ENCODE measurements at regions of chr13 and their contacts with region 1.

Region 1: DNA sequence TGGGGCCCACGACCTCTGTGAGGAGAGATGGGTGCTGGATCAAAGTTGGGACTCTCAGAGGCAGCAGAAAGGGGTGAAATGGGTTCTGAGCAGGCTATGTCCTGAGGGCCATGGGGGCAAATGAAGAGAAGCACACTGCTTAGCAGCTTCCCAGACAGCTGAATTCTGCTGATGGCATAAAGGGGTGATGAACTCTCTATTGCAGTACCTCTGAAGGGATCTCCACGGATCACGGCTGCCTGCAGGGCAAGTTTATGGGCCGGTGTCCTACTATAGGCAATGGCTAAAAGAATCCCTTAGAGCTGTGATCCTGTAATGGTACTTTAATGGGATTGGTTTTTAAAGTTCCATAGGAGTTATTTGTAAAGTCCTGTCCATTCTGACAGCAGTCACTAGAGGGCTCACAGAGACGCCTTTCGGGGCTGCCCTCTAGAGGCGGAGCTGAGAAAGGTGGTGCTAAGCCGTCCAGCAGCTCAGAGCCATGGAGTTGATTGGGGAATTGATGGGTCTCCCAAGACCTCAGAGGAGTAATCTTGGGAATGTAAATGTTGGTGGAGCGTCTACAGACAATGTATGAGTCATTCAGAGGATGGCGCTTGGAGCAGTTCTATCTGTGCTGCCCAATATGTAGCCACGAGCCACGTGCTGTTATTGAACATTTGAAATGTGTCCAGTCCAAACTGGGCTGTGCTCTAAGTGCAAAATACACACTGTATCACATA is 287.3 kb downstream of the COG6 start:
- DNase-seq: peak; percentile 40 to 81 (median 72)
- ATAC-seq: peak; percentile 99
- H3K4me3 ChIP-seq: no peak overlapping the region
- H3K4me3 Mint-ChIP-seq: no peak overlapping the region
- H3K27ac ChIP-seq: no peak overlapping the region
- H3K27ac Mint-ChIP-seq: no peak overlapping the region
- H3K4me1 ChIP-seq: no peaks in the 10 kb centered on the region
- H3K4me1 Mint-ChIP-seq: peaks cover 4% of the 10 kb centered on the region
- H3K27me3 ChIP-seq: peaks cover 0 to 2% of the 10 kb centered on the region in 2 experiments
- H3K27me3 Mint-ChIP-seq: peaks cover 2% of the 10 kb centered on the region
- CTCF ChIP-seq: peak; percentile 96

Region 2: DNA sequence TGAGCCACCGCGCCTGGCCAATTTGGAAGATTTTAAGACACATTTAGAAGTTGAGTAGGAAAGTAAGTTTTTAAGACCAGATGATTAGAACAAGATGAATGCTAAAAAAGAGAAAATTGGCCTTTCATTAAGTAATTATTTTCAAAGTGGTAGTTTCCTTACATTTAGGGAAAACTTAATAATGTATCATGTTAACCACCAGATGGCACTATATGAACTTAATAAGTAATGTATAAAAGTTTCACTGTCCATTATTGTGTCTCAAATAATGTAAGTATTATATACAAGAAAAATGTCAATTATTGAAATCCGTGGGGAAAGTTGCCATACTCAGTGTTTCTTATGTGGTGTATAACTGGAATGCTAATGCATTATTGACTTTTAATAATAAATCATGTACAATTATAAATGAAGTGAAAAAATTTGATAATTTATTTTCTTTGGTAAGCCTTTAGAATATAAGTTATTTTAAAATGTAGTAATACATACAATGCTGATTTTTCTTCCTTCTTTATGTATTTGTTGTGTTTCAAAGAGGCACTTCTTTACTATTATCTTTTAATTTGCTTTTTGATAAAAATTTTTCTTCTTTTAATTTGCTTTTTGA is 258.1 kb before region 1 on chr13:
- CTCF ChIA-PET with region 1: interaction called, 3 read pairs
- POLR2A ChIA-PET with region 1: no interaction called
- intact Hi-C with region 1: loop called (anchors 2 to 5 kb)
- DNase-seq: peak in 2 of 9 experiments; percentile 29 to 51
- ATAC-seq: peak; percentile 46
- H3K4me3 ChIP-seq: no peak overlapping the region
- H3K4me3 Mint-ChIP-seq: no peak overlapping the region
- H3K27ac ChIP-seq: no peak overlapping the region
- H3K27ac Mint-ChIP-seq: no peak overlapping the region
- H3K4me1 ChIP-seq: no peaks in the 10 kb centered on the region
- H3K4me1 Mint-ChIP-seq: no peaks in the 10 kb centered on the region
- H3K27me3 ChIP-seq: no peaks in the 10 kb centered on the region
- H3K27me3 Mint-ChIP-seq: no peaks in the 10 kb centered on the region
- CTCF ChIP-seq: peak; percentile 59

Region 3: DNA sequence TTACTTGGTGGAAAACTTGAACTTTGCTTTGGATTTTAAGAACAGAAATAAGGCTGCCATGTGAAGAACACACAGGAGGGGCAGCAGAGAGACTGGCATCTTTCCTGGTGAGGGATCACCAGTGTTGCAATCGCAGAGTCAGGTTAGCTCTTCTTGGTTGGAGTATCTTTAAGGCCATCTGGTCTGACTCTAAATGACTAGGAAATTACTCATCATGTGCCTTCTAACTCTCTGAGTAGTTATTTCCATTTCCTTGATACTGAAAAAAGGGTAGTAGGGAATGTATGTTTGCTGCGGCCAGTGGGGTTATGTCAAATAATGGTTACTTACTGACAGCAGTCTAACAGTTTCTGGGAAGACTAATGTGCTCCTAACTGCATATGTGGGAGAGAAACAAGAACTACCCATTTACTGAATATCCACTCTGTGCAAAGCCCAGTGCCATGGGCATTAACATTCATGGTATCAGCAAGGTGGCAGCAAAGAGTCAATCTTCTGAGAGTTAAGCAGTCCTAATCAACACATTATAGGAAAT is 165.1 kb before region 1 on chr13:
- CTCF ChIA-PET with region 1: interaction called, 11 read pairs
- POLR2A ChIA-PET with region 1: no interaction called
- intact Hi-C with region 1: loop called (anchors 5 kb)
- DNase-seq: peak in 2 of 9 experiments; percentile 37 to 48
- ATAC-seq: peak; percentile 52
- H3K4me3 ChIP-seq: no peak overlapping the region
- H3K4me3 Mint-ChIP-seq: no peak overlapping the region
- H3K27ac ChIP-seq: no peak overlapping the region
- H3K27ac Mint-ChIP-seq: no peak overlapping the region
- H3K4me1 ChIP-seq: peaks cover 25% of the 10 kb centered on the region
- H3K4me1 Mint-ChIP-seq: peaks cover 31% of the 10 kb centered on the region
- H3K27me3 ChIP-seq: no peaks in the 10 kb centered on the region
- H3K27me3 Mint-ChIP-seq: no peaks in the 10 kb centered on the region
- CTCF ChIP-seq: no peak

Region 4: GRCh38 chr13:39892721-39893685 is 49.7 kb before region 1 on chr13:
- CTCF ChIA-PET with region 1: interaction called, 14 read pairs
- POLR2A ChIA-PET with region 1: no interaction called
- intact Hi-C with region 1: no loop called
- DNase-seq: peak in 5 of 9 experiments; percentile 6 to 63 (median 30)
- ATAC-seq: peak; percentile 57
- H3K4me3 ChIP-seq: no peak overlapping the region
- H3K4me3 Mint-ChIP-seq: peak overlapping the region; percentile 24
- H3K27ac ChIP-seq: no peak overlapping the region
- H3K27ac Mint-ChIP-seq: peak overlapping the region; percentile 7
- H3K4me1 ChIP-seq: peaks cover 26% of the 10 kb centered on the region
- H3K4me1 Mint-ChIP-seq: peaks cover 35% of the 10 kb centered on the region
- H3K27me3 ChIP-seq: no peaks in the 10 kb centered on the region
- H3K27me3 Mint-ChIP-seq: no peaks in the 10 kb centered on the region
- CTCF ChIP-seq: no peak

Region 5: GRCh38 chr13:39959497-39960144 is 16.9 kb after region 1 on chr13:
- CTCF ChIA-PET with region 1: interaction called, 59 read pairs
- POLR2A ChIA-PET with region 1: interaction called, 8 read pairs
- intact Hi-C with region 1: no loop called
- DNase-seq: no peak
- ATAC-seq: no peak
- H3K4me3 ChIP-seq: no peak overlapping the region
- H3K4me3 Mint-ChIP-seq: no peak overlapping the region
- H3K27ac ChIP-seq: no peak overlapping the region
- H3K27ac Mint-ChIP-seq: no peak overlapping the region
- H3K4me1 ChIP-seq: peaks cover 24% of the 10 kb centered on the region
- H3K4me1 Mint-ChIP-seq: peaks cover 41% of the 10 kb centered on the region
- H3K27me3 ChIP-seq: no peaks in the 10 kb centered on the region
- H3K27me3 Mint-ChIP-seq: no peaks in the 10 kb centered on the region
- CTCF ChIP-seq: no peak

Region 6: DNA sequence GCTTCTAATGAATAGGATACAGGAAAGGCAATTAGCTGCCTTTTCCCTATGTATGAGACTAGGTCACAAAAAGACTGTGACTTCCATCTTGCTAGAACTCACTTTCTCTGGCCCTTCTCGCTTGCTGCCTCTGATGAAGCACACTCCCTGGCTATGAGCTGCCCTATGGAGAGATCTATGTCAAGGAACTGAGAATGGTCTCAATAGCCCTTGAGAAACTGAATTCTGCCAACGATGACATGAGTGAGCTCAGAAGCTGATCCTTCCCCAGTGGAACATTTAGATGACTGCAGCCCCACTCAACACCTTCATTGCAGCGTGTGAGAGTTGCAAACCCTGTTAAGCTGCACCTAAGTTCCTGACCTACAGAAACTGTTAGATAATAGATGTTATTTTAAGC is 22.6 kb after region 1 on chr13:
- CTCF ChIA-PET with region 1: interaction called, 13 read pairs
- POLR2A ChIA-PET with region 1: no interaction called
- intact Hi-C with region 1: no loop called
- DNase-seq: no peak
- ATAC-seq: no peak
- H3K4me3 ChIP-seq: no peak overlapping the region
- H3K4me3 Mint-ChIP-seq: no peak overlapping the region
- H3K27ac ChIP-seq: no peak overlapping the region
- H3K27ac Mint-ChIP-seq: no peak overlapping the region
- H3K4me1 ChIP-seq: no peaks in the 10 kb centered on the region
- H3K4me1 Mint-ChIP-seq: peaks cover 2% of the 10 kb centered on the region
- H3K27me3 ChIP-seq: no peaks in the 10 kb centered on the region
- H3K27me3 Mint-ChIP-seq: no peaks in the 10 kb centered on the region
- CTCF ChIP-seq: no peak

Region 7: GRCh38 chr13:40682449-40683240 is 739.9 kb after region 1 on chr13:
- CTCF ChIA-PET with region 1: interaction called, 84 read pairs
- POLR2A ChIA-PET with region 1: interaction called, 7 read pairs
- intact Hi-C with region 1: loop called (anchors 1 kb)
- DNase-seq: peak in 2 of 9 experiments; percentile 27 to 51
- ATAC-seq: peak; percentile 48
- H3K4me3 ChIP-seq: no peak overlapping the region
- H3K4me3 Mint-ChIP-seq: no peak overlapping the region
- H3K27ac ChIP-seq: no peak overlapping the region
- H3K27ac Mint-ChIP-seq: peak overlapping the region; percentile 6
- H3K4me1 ChIP-seq: peaks cover 6% of the 10 kb centered on the region
- H3K4me1 Mint-ChIP-seq: peaks cover 9% of the 10 kb centered on the region
- H3K27me3 ChIP-seq: no peaks in the 10 kb centered on the region
- H3K27me3 Mint-ChIP-seq: no peaks in the 10 kb centered on the region
- CTCF ChIP-seq: peak; percentile 87

Measured in CD8-positive, alpha-beta T cell (primary cell).